Motor neuron (in vitro differentiated cells): ENCODE measurements at regions of chr19 and their contacts with region 1.

Region 1: GRCh38 chr19:29478578-29479565 is 46.9 kb upstream of the VSTM2B start:
- ATAC-seq: peak; percentile 65 to 98 (median 84)
- H3K4me3 ChIP-seq: no peak overlapping the region
- H3K27ac ChIP-seq: no peak overlapping the region
- H3K4me1 ChIP-seq: no peaks in the 10 kb centered on the region

Region 2: DNA sequence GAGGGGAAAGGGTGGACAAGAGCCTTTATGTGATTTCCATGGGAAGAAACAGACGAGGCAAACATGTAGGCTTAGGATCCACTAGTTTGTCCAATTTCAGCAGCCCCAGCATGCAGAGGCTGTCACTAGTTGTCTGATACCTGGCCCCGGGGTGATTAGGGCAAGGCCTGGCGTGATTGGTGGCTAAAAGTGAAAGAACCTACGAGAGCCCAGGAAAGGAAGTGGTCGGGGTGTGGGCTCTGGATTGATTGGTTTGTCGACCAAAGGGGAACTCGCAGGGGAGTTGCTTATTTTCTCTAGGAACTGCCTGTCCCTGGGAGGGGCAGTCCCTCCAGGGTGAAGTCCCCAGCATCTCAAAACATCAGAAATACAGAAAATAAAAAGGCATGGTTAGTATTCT is 201.8 kb before region 1 on chr19:
- in situ Hi-C with region 1: loop called in 1 of 9 experiments (anchors 25 kb)
- ATAC-seq: peak in 5 of 8 experiments; percentile 27 to 86 (median 66)
- H3K4me3 ChIP-seq: no peak overlapping the region
- H3K27ac ChIP-seq: no peak overlapping the region
- H3K4me1 ChIP-seq: peaks cover 5 to 14% of the 10 kb centered on the region in 2 donors

Region 3: GRCh38 chr19:29564574-29565005 is 85.7 kb after region 1 on chr19:
- in situ Hi-C with region 1: no loop called
- ATAC-seq: no peak
- H3K4me3 ChIP-seq: no peak overlapping the region
- H3K27ac ChIP-seq: no peak overlapping the region
- H3K4me1 ChIP-seq: no peaks in the 10 kb centered on the region

Region 4: DNA sequence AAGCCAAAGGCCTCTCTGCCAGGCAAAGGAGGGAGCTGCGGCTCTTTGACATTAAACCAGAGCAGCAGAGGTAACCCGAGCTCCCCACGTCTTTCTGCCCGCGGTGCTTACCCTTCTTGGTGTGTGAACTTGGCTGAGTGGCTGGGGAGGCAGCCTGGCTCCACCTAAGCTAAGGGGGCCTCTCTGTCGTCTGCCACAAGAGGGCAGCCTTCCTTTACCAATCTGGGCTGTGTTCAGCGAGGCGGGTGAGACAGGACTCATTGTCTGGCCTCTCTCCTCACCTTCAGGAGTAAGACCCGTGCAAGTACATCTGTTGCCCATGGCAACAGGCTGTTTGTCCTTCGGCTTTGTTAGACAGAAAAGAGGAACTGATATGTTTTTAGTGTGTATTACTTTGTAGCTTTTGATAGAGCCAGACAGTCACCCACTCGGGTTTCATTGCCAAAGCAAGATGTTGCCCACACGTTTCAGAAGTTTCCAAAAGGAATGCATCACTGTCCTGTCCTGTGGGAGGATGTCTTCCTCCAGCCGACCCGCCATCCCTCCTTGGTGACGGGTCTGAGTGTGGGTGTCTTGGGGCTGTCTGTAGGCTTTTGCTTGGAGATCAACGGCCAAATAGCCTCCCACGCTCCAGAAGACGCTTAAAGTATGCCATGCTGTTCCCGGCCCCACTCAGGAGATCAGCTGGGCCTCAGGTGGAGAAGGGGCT is 131.8 kb after region 1 on chr19:
- in situ Hi-C with region 1: no loop called
- ATAC-seq: peak; percentile 64 to 75 (median 68)
- H3K4me3 ChIP-seq: no peak overlapping the region
- H3K27ac ChIP-seq: no peak overlapping the region
- H3K4me1 ChIP-seq: peaks cover 2 to 6% of the 10 kb centered on the region in 2 donors